ENCODE measurements at regions of chr6 and their contacts with region 1.

Region 1: GRCh38 chr6:132530293-132530974 is 7.6 kb upstream of the TAAR9 start:
- DNase-seq: peak; percentile 82
- ATAC-seq: peak; percentile 57
- H3K4me3 Mint-ChIP-seq: no peak overlapping the region
- H3K27ac Mint-ChIP-seq: no peak overlapping the region
- H3K4me1 Mint-ChIP-seq: no peaks in the 10 kb centered on the region
- H3K27me3 Mint-ChIP-seq: peaks cover 6% of the 10 kb centered on the region

Region 2: GRCh38 chr6:132512638-132513632 is 17.5 kb before region 1 on chr6 and contains the start of gene STX7:
- CTCF ChIA-PET with region 1: interaction called, 13 read pairs
- POLR2A ChIA-PET with region 1: no interaction called
- intact Hi-C with region 1: no loop called
- DNase-seq: peak; percentile 90
- ATAC-seq: peak; percentile 97
- H3K4me3 Mint-ChIP-seq: peak within 1 kb of the TSS; percentile 88
- H3K27ac Mint-ChIP-seq: peak within 1 kb of the TSS; percentile 85
- H3K4me1 Mint-ChIP-seq: peaks cover 30% of the 10 kb centered on the region
- H3K27me3 Mint-ChIP-seq: no peaks in the 10 kb centered on the region
- total RNA-seq, gene STX7: 13.3 to 20.3 TPM

Region 3: DNA sequence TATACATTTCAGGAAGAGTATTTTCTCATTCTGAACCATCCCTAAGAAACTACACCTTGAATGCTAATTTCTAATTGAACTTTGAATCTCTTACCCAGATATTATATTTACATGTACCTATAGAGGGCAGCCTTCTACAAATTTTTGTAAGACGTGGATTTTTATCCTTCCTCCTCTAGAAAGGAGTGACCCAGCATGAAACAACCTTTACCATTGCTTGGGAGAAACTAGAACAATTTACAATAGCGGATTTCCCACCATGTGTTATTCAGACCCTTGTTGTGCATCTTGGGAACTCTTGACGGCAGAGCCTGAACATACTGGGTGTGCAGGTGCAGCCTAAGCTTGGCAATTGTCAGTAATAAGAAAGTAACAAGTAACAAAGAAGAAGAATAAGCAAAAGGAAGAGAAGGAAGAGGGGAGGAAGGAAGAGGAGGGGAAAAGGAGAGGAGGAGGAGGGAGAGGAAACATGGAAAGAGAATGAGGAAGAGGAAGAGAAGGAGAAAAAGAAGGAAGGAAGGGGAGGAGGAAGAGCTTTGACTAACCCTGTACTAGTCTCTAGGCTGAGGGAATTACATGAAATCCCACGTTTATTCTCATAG is 139.4 kb after region 1 on chr6:
- CTCF ChIA-PET with region 1: no interaction called
- POLR2A ChIA-PET with region 1: no interaction called
- intact Hi-C with region 1: loop called (anchors 5 to 10 kb)
- DNase-seq: no peak
- ATAC-seq: peak; percentile 64
- H3K4me3 Mint-ChIP-seq: no peak overlapping the region
- H3K27ac Mint-ChIP-seq: no peak overlapping the region
- H3K4me1 Mint-ChIP-seq: peaks cover 3% of the 10 kb centered on the region
- H3K27me3 Mint-ChIP-seq: peaks cover 3% of the 10 kb centered on the region

Region 4: DNA sequence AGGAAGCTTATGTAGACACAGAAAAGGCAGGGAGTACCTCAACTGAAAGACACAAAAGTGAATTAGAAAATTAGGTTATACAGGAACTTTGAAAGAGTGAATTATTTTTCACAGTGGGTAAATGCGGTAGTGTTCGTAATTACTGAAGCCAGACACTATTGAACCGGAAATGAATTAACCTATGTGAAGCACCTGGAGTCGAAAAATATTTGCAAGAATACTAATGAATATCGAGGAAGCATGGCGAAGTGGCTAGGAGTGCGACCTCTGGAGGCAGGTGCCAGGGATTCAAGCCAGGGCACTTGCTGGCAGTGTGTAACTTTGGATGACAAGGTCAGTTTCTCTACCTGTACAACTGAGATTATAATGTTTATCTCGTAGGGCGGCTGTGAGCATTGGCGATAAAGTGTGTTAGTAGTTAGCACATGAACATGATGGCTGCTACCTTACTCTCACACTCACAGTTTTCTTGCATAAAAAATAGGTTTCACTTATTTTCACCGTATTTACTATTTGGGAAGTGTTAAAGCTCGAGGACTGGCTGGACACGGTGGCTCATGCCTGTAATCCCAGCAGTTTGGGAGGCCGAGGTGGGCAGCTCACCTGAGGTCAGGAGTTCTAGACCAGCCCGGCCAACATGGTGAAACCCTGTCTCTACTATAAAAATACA is 268.6 kb after region 1 on chr6:
- CTCF ChIA-PET with region 1: no interaction called
- POLR2A ChIA-PET with region 1: no interaction called
- intact Hi-C with region 1: loop called in 1 of 2 experiments (anchors 5 kb)
- DNase-seq: peak; percentile 84
- ATAC-seq: peak; percentile 86
- H3K4me3 Mint-ChIP-seq: no peak overlapping the region
- H3K27ac Mint-ChIP-seq: no peak overlapping the region
- H3K4me1 Mint-ChIP-seq: peaks cover 21% of the 10 kb centered on the region
- H3K27me3 Mint-ChIP-seq: no peaks in the 10 kb centered on the region

Region 5: DNA sequence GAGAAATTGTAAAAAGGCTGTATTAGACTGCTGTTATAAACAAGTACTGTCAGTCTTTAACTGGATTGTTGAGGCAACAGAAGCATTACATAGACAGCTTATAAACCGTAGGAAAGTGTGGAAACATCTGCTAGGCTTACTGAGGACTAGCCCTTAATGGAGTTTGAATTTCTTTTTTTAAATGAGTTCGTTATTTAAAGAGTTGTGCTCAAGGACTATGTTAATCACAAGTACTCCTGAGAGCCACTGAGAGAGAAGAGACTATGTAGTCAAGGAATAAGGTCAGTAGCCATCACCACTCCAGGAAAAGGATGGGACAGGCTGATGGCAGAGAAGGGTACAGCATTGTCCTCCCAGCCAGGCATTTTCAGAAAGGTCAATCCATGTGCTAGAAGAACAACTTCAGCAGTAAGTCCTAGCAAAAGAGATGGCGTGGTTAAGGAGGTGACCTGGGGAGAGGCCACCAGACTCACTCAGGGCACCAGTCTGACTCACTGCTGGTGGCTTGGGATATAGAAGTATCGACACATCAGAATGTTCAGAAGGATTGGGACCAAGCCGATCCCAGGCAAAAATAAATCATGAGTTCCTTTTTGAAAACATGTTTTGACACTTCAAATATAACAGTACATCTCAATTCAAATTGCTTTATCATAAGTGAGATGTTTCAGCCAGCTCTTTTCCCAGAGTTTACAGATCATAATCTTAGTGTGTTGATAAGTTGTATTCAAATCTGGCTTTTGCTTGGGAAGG is 290.4 kb after region 1 on chr6:
- CTCF ChIA-PET with region 1: interaction called, 4 read pairs
- POLR2A ChIA-PET with region 1: no interaction called
- intact Hi-C with region 1: loop called in 1 of 2 experiments (anchors 5 kb)
- DNase-seq: no peak
- ATAC-seq: peak; percentile 10
- H3K4me3 Mint-ChIP-seq: no peak overlapping the region
- H3K27ac Mint-ChIP-seq: peak overlapping the region; percentile 61
- H3K4me1 Mint-ChIP-seq: peaks cover 48% of the 10 kb centered on the region
- H3K27me3 Mint-ChIP-seq: no peaks in the 10 kb centered on the region

Region 6: DNA sequence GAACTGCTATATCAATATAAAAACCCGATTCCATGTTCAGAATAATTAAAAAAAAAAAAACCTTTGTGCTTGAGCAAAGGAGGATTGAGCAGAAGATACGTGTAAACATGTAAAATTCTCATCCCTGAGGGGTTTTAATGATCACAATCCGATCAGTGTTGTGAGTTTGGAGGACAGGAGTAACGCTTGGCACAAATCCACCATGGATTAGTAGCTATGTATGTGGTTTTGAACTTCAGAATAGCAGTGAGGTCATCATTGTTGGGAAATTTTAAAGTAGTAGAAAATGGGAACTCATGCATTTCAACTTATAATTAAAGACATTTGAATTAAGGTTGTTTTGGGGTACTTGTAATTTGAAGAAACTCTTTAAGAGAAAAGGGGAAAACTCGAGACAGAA is 487.1 kb after region 1 on chr6:
- CTCF ChIA-PET with region 1: no interaction called
- POLR2A ChIA-PET with region 1: no interaction called
- intact Hi-C with region 1: no loop called
- DNase-seq: no peak
- ATAC-seq: no peak
- H3K4me3 Mint-ChIP-seq: no peak overlapping the region
- H3K27ac Mint-ChIP-seq: no peak overlapping the region
- H3K4me1 Mint-ChIP-seq: no peaks in the 10 kb centered on the region
- H3K27me3 Mint-ChIP-seq: peaks cover 3% of the 10 kb centered on the region

Region 7: GRCh38 chr6:133512410-133513016 is 982.1 kb after region 1 on chr6:
- CTCF ChIA-PET with region 1: no interaction called
- POLR2A ChIA-PET with region 1: no interaction called
- intact Hi-C with region 1: loop called in 1 of 2 experiments (anchors 2 kb)
- DNase-seq: peak; percentile 58
- ATAC-seq: no peak
- H3K4me3 Mint-ChIP-seq: no peak overlapping the region
- H3K27ac Mint-ChIP-seq: no peak overlapping the region
- H3K4me1 Mint-ChIP-seq: no peaks in the 10 kb centered on the region
- H3K27me3 Mint-ChIP-seq: peaks cover 21% of the 10 kb centered on the region

Region 8: DNA sequence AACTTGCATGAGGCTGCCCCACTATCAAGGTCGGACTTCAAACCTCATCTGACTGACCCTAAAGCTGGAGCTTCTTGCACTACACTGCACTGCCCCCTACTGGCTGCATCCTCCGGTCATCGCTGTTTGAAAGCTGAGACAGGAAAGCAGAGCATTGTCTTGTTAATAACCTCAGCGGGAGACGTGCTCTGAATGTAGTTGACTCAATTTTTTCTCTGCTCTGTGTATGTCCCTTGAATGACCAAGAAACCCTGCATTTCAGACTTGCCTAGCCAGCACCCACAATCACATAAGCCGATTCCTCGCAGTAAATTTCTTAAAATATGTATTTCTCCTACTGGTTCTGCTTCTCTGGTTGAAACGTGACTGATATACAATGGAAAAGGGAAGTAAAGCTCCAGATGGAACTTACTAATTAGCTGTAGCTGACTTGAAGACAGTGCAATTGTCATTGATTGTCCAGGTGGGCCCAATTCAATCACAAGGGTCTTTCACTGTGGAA is 1386.3 kb after region 1 on chr6:
- CTCF ChIA-PET with region 1: no interaction called
- POLR2A ChIA-PET with region 1: no interaction called
- intact Hi-C with region 1: loop called in 1 of 2 experiments (anchors 2 kb)
- DNase-seq: peak; percentile 91
- ATAC-seq: peak; percentile 60
- H3K4me3 Mint-ChIP-seq: no peak overlapping the region
- H3K27ac Mint-ChIP-seq: no peak overlapping the region
- H3K4me1 Mint-ChIP-seq: peaks cover 3% of the 10 kb centered on the region
- H3K27me3 Mint-ChIP-seq: peaks cover 19% of the 10 kb centered on the region